Activated B cell treated with CpG ODN at 0.5 μM for 24 hours (primary cell): ENCODE measurements at regions of chr11 and their contacts with region 1.

Region 1: DNA sequence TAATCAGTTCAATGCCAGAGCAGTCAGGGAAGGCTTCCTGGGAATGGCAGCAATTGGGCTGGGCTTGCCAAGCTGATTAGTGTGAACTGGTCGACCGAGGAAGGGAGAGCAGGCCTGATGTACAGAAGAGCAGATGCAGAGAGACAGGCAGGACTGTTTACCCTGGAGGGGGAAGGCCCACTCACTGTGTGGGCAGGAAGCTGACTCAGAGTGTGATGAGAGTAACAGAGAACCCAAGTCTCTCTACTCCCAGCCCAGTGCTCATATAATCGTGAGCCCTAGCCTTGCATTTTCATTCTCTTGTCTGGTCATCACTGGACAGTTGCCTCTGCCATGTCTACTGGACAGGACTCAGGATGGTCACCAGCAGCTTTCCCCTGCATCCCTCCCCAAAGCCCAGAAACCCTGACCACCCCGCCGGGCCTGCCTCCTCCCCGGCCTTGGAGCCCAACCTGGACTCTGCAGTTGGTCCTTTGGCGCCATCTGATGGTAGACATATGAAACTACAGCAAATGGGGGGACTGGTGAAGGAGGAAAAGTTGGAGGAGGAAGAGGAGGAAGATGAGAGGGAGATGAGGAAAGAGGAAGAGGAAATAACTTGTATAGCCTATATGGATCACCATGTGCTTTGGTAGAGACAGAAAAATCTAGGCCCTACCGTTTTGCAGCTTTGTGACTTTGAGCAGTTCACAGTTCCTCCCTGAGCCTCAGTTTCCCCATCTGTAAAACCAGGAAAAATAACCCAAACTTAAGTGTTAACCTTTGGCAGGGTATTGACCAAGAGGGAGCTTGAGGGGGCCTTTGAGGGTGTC is 43.4 kb upstream of the PRDM11 start:
- DNase-seq: peak; percentile 70
- ATAC-seq: peak; percentile 98
- H3K4me3 Mint-ChIP-seq: peak overlapping the region; percentile 85
- H3K27ac Mint-ChIP-seq: peak overlapping the region; percentile 88
- H3K4me1 Mint-ChIP-seq: peaks cover 19% of the 10 kb centered on the region
- H3K27me3 Mint-ChIP-seq: peaks cover 13% of the 10 kb centered on the region
- CTCF ChIP-seq: peak; percentile 99

Region 2: DNA sequence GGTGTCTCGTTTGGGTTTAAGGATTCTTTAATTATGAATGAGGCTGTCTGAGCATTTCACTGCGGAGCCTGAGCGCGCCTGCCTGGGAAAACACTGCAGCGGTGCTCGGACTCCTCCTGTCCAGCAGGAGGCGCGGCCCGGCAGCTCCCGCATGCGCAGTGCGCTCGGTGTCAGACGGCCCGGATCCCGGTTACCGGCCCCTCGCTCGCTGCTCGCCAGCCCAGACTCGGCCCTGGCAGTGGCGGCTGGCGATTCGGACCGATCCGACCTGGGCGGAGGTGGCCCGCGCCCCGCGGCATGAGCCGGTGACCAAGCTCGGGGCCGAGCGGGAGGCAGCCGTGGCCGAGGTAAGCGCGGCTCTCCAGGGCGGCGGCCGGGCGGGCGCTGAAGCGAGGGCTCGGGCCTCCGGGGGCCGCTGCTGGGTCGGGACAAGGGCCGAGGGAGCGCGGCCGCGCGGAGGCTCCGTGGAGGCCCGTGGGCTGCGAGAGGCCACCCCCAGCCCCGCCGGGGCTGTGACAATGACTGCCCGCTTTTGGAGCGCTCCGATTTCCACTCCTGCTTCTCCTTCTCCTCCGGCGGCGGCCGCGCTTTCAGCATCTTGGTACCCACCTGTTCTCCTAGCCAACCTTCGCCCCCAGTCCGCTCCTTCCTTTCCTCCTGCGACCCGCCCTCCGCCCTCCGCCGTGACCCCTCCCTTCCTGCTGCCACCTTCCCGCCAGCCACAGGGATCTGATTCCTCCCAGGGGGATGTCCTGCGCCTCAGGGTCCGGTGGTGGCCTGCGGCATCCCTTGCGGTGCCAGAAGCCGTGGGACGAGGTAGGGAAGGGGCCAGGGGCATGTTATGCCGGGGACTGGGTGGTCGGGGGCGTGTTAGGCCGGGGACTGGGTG is 1007.3 kb before region 1 on chr11 and contains the start of gene EXT2:
- CTCF ChIA-PET with region 1: no interaction called
- POLR2A ChIA-PET with region 1: no interaction called
- intact Hi-C with region 1: loop called (anchors 10 kb)
- DNase-seq: peak; percentile 85
- ATAC-seq: peak; percentile 94
- H3K4me3 Mint-ChIP-seq: peak within 1 kb of the TSS; percentile 87
- H3K27ac Mint-ChIP-seq: no peak within 1 kb of the TSS
- H3K4me1 Mint-ChIP-seq: peaks cover 24% of the 10 kb centered on the region
- H3K27me3 Mint-ChIP-seq: no peaks in the 10 kb centered on the region
- CTCF ChIP-seq: no peak
- total RNA-seq, gene EXT2: 21.9 and 22.1 TPM in 2 replicates

Region 3: DNA sequence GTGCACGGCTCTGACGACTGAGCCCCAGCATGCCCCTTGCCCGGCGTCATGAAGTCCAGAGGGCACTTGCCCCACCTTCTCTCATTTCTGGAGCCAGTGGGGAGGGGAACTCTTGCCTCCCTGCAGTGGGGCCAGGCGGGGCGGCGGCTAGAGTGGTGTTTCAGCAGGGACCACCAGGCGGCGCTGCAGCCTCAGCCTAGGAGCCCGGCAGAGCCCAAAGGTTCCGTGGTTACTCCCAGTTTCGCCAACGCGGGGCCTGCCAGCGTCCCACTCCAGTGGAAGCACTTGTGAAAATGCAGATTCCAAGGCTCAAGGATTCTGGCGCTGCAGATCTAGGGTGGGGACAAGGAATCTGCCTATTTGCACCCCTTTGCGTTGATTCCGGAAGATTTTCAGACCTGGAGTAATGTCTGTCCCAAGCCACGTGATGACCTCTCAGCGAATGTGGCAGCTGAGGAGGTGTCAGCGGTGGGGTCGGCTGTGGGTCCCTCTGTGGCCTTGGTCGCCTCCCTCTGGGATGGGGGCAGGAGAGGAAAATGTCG is 481.8 kb before region 1 on chr11:
- CTCF ChIA-PET with region 1: no interaction called
- POLR2A ChIA-PET with region 1: no interaction called
- intact Hi-C with region 1: loop called (anchors 5 kb)
- DNase-seq: peak; percentile 71
- ATAC-seq: peak; percentile 49
- H3K4me3 Mint-ChIP-seq: peak overlapping the region; percentile 15
- H3K27ac Mint-ChIP-seq: no peak overlapping the region
- H3K4me1 Mint-ChIP-seq: peaks cover 67% of the 10 kb centered on the region
- H3K27me3 Mint-ChIP-seq: no peaks in the 10 kb centered on the region
- CTCF ChIP-seq: peak; percentile 20

Region 4: GRCh38 chr11:44927174-44927661 is 175.8 kb before region 1 on chr11:
- CTCF ChIA-PET with region 1: interaction called, 1,010 read pairs
- POLR2A ChIA-PET with region 1: interaction called, 12 read pairs
- intact Hi-C with region 1: loop called (anchors 1 kb)
- DNase-seq: peak; percentile 59
- ATAC-seq: peak; percentile 61
- H3K4me3 Mint-ChIP-seq: no peak overlapping the region
- H3K27ac Mint-ChIP-seq: no peak overlapping the region
- H3K4me1 Mint-ChIP-seq: peaks cover 3% of the 10 kb centered on the region
- H3K27me3 Mint-ChIP-seq: peaks cover 2% of the 10 kb centered on the region
- CTCF ChIP-seq: peak; percentile 38

Region 5: DNA sequence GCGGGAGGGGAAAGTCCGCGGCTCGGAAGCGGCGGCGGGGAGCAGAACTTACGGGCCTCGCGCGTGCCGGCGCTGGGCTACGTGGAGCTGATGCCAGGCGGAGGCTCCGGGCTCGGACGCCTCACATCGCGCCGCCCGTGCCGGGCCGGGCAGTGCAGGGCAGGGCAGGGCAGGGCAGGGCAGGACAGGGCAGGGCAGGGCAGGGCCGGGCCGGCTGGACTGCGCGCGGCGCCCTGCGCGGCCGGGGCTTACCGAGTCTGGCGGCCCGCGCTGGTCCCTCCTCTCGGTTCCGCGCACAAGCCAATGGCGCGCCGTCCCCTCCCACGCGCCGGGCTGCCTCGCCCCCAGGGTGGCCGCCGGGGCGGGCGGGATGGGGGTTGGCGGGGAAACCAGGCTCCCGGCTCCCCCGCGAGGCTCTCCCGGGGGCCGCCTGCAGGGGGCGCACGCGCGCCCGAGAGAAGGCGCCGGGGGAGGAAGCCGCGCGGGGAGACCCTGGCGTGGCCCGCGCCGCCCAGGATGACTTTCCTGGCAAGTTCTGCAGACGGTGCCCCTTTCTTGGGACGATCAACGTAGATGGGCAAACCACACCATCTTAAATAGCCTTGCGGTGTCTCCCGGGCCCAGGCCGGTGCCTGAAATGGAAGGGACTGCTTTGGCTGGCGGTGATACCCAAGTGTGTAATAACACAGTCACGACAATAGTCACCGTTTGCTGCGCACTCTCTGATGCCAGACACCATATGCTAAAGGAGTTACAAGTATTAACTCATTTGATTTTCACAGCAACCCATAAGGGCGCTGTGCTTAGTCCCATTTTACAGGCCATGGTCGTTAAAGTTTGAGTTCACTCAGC is 152.2 kb before region 1 on chr11 and contains the start of gene TP53I11:
- CTCF ChIA-PET with region 1: interaction called, 1,010 read pairs
- POLR2A ChIA-PET with region 1: interaction called, 17 read pairs
- intact Hi-C with region 1: loop called (anchors 1 kb)
- DNase-seq: peak; percentile 74
- ATAC-seq: peak; percentile 76
- H3K4me3 Mint-ChIP-seq: peak within 1 kb of the TSS; percentile 91
- H3K27ac Mint-ChIP-seq: peak within 1 kb of the TSS; percentile 87
- H3K4me1 Mint-ChIP-seq: peaks cover 60% of the 10 kb centered on the region
- H3K27me3 Mint-ChIP-seq: no peaks in the 10 kb centered on the region
- CTCF ChIP-seq: peak; percentile 44
- total RNA-seq, gene TP53I11: 145 and 175 TPM in 2 replicates

Region 6: DNA sequence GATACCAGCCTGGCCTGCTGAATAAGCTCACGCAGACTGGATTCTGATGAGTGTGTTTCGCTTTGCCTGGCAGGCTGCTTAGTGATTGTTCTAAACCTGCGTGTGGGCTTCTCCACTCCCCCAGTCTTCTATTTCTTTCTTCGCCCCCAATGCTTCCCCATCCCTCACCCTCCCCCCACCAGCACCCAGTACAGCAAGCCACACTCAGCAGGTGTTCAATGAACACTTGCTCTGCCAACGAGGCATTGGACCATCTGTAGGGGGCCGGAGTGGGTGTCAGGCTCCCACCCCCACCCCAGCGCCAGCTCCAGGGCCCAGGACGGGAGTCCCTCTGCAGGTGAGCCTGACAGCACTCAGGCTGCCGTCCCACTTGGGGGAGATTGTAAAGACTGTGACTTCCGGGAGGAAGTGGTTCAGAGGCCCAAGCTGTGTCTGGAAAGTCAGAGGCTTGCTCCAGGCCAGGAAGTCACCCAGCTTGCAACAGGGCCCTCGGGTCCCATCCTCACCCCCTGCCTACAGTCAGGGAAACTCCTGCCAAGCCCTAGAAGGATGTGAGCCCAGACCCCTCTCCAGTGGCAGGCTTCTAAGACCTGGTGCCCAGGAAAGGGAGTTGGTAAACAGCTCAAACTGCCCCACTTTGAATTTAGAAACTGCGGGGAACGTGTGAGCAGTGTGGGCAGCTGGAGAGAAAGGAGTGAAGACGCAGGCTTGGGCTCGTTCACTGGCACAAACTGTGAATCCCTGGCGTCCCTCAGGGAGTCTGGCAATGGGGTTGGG is 22.9 kb before region 1 on chr11:
- CTCF ChIA-PET with region 1: interaction called, 19 read pairs
- POLR2A ChIA-PET with region 1: interaction called, 6 read pairs
- intact Hi-C with region 1: loop called (anchors 2 kb)
- DNase-seq: peak; percentile 45
- ATAC-seq: peak; percentile 71
- H3K4me3 Mint-ChIP-seq: peak overlapping the region; percentile 59
- H3K27ac Mint-ChIP-seq: peak overlapping the region; percentile 84
- H3K4me1 Mint-ChIP-seq: peaks cover 71% of the 10 kb centered on the region
- H3K27me3 Mint-ChIP-seq: no peaks in the 10 kb centered on the region
- CTCF ChIP-seq: no peak